ENCODE measurements at regions of chr15 and their contacts with region 1.

Region 1: GRCh38 chr15:68789534-68790241 is 31.0 kb downstream of the ANP32A start:
- DNase-seq: peak in 2 of 6 donors; percentile 23 to 33
- ATAC-seq: no peak
- H3K4me3 ChIP-seq: no peak overlapping the region
- H3K27ac ChIP-seq: peak overlapping the region in 3 of 4 donors; percentile 22 to 59 (median 40)
- H3K4me1 ChIP-seq: peaks cover 54 to 70% (median 58%) of the 10 kb centered on the region in 3 donors
- H3K27me3 ChIP-seq: no peaks in the 10 kb centered on the region
- CTCF ChIP-seq: no peak

Region 2: GRCh38 chr15:68650901-68651709 is 138.6 kb before region 1 on chr15:
- intact Hi-C with region 1: no loop called
- DNase-seq: peak in 5 of 6 donors; percentile 41 to 91 (median 77)
- ATAC-seq: peak; percentile 70 to 92 (median 84)
- H3K4me3 ChIP-seq: no peak overlapping the region
- H3K27ac ChIP-seq: no peak overlapping the region
- H3K4me1 ChIP-seq: no peaks in the 10 kb centered on the region
- H3K27me3 ChIP-seq: no peaks in the 10 kb centered on the region
- CTCF ChIP-seq: peak; percentile 44 to 81 (median 72)

Region 3: GRCh38 chr15:68820295-68821189 is 30.9 kb after region 1 on chr15 and contains the start of gene ANP32A:
- intact Hi-C with region 1: loop called in 1 of 3 experiments (anchors 5 kb)
- DNase-seq: peak; percentile 96 to 98 (median 96)
- ATAC-seq: peak; percentile 66 to 82 (median 80)
- H3K4me3 ChIP-seq: peak within 1 kb of the TSS; percentile 71 to 90 (median 86)
- H3K27ac ChIP-seq: peak within 1 kb of the TSS; percentile 98 to 100 (median 99)
- H3K4me1 ChIP-seq: peaks cover 18 to 20% (median 20%) of the 10 kb centered on the region in 3 donors
- H3K27me3 ChIP-seq: no peaks in the 10 kb centered on the region
- CTCF ChIP-seq: no peak
- total RNA-seq, gene ANP32A: 26.9 to 64.3 (median 41.4) TPM